MCF 10A (cell line): ENCODE measurements at regions of chr6 and their contacts with region 1.

Region 1: GRCh38 chr6:125790358-125791150 is at the start of gene NCOA7:
- DNase-seq: peak; percentile 73
- H3K4me3 Mint-ChIP-seq: peak within 1 kb of the TSS; percentile 93
- H3K27ac Mint-ChIP-seq: peak within 1 kb of the TSS; percentile 93
- H3K4me1 Mint-ChIP-seq: peaks cover 40% of the 10 kb centered on the region
- H3K27me3 Mint-ChIP-seq: no peaks in the 10 kb centered on the region
- CTCF ChIP-seq: no peak
- total RNA-seq, gene NCOA7: 50.9 and 52.3 TPM in 2 replicates

Region 2: GRCh38 chr6:125810445-125810844 is 19.9 kb after region 1 on chr6:
- CTCF ChIA-PET with region 1: interaction called, 8 read pairs
- POLR2A ChIA-PET with region 1: interaction called, 10 read pairs
- intact Hi-C with region 1: no loop called
- DNase-seq: no peak
- H3K4me3 Mint-ChIP-seq: no peak overlapping the region
- H3K27ac Mint-ChIP-seq: no peak overlapping the region
- H3K4me1 Mint-ChIP-seq: peaks cover 35% of the 10 kb centered on the region
- H3K27me3 Mint-ChIP-seq: no peaks in the 10 kb centered on the region
- CTCF ChIP-seq: no peak

Region 3: DNA sequence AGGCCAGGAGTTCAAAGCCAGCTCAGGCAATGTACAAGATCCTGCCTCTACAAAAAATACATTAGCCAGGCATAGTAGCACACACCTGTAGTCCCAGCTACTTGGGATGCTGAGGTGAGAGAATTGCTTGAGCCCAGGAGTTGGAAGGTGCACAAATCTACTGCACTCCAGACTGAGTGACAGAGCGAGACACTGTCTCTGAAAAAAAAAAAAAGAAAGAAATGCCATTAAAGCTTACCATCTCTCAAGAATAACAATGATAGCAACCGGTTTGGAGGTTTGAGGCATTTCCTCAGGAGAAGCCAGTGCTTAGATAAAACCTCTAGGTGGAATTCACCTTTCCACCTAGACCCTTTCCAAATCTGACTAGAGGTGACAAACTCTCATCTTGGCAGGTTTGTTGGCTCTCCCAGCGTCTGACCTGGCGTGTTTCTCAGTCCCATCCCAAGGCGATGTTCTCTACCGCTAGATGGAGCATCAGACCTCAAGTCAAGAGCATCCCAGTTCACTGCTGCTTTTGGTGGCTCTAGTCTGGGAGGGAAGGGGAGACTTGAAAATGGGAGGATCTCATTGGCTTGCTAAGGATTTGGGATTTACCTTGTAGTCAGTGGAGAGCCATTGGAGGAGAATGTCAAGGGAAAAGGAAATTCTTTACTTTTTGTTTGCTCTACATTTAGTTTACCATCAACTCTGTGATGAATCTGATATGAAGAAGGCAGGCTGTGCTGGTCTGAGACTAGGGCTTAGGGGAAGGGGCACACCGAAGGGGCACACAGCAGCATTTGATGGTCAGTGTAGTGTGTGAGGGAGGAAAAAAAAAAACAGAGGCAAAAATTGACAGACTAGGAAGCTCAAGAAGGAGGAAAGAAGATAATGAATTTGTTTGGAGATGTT is 68.1 kb after region 1 on chr6:
- CTCF ChIA-PET with region 1: interaction called, 18 read pairs
- POLR2A ChIA-PET with region 1: interaction called, 12 read pairs
- intact Hi-C with region 1: loop called (anchors 2 kb)
- DNase-seq: peak; percentile 86
- H3K4me3 Mint-ChIP-seq: no peak overlapping the region
- H3K27ac Mint-ChIP-seq: peak overlapping the region; percentile 49
- H3K4me1 Mint-ChIP-seq: peaks cover 25% of the 10 kb centered on the region
- H3K27me3 Mint-ChIP-seq: no peaks in the 10 kb centered on the region
- CTCF ChIP-seq: peak; percentile 61

Region 4: GRCh38 chr6:125913864-125914351 is 123.4 kb after region 1 on chr6:
- CTCF ChIA-PET with region 1: interaction called, 26 read pairs
- POLR2A ChIA-PET with region 1: interaction called, 51 read pairs
- intact Hi-C with region 1: loop called (anchors 2 kb)
- DNase-seq: peak; percentile 97
- H3K4me3 Mint-ChIP-seq: no peak overlapping the region
- H3K27ac Mint-ChIP-seq: peak overlapping the region; percentile 94
- H3K4me1 Mint-ChIP-seq: peaks cover 46% of the 10 kb centered on the region
- H3K27me3 Mint-ChIP-seq: no peaks in the 10 kb centered on the region
- CTCF ChIP-seq: no peak

Region 5: GRCh38 chr6:125944434-125944816 is 153.9 kb after region 1 on chr6:
- CTCF ChIA-PET with region 1: interaction called, 12 read pairs
- POLR2A ChIA-PET with region 1: interaction called, 68 read pairs
- intact Hi-C with region 1: no loop called
- DNase-seq: peak; percentile 93
- H3K4me3 Mint-ChIP-seq: no peak overlapping the region
- H3K27ac Mint-ChIP-seq: peak overlapping the region; percentile 92
- H3K4me1 Mint-ChIP-seq: peaks cover 72% of the 10 kb centered on the region
- H3K27me3 Mint-ChIP-seq: no peaks in the 10 kb centered on the region
- CTCF ChIP-seq: no peak

Region 6: GRCh38 chr6:125986300-125987025 is 195.9 kb after region 1 on chr6 and contains the start of gene TRMT11:
- CTCF ChIA-PET with region 1: interaction called, 6 read pairs
- POLR2A ChIA-PET with region 1: interaction called, 36 read pairs
- intact Hi-C with region 1: no loop called
- DNase-seq: peak; percentile 92
- H3K4me3 Mint-ChIP-seq: no peak within 1 kb of the TSS
- H3K27ac Mint-ChIP-seq: no peak within 1 kb of the TSS
- H3K4me1 Mint-ChIP-seq: no peaks in the 10 kb centered on the region
- H3K27me3 Mint-ChIP-seq: no peaks in the 10 kb centered on the region
- CTCF ChIP-seq: no peak
- total RNA-seq, gene TRMT11: 28.8 and 32.5 TPM in 2 replicates